T-cell (primary cell): ENCODE measurements at regions of chr18 and their contacts with region 1.

Region 1: DNA sequence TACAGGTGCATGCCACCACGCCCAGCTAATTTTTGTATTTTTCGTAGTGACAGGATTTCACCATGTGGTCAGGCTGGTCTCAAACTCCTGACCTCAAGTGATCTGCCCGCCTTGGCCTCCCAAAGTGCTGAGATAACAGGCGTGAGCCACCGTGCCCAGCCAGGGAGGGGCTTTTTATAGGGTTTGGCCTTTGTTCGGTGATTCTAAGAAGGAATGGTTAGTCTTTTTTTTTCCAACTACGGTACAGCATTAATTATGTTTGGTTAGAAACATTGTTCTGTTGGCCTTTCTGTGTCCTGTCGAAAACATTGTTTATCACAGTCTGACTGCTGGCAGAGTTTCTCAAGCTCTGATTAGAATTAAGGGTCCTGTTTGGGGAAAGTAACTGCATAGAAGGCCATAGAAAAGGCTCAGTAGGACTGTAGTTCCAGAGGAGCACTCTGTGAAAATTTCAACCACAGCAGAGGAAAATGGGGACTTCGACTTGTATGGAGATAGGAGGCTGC is 19.3 kb upstream of the SMCHD1 start:
- DNase-seq: peak in 4 of 35 experiments; percentile 4 to 61 (median 20)
- ATAC-seq: peak; percentile 34 to 52 (median 49)
- H3K4me3 ChIP-seq: peak overlapping the region; percentile 0 to 35
- H3K4me3 Mint-ChIP-seq: peak overlapping the region; percentile 66 to 84 (median 79)
- H3K27ac ChIP-seq: peak overlapping the region; percentile 100
- H3K27ac Mint-ChIP-seq: peak overlapping the region; percentile 99 to 100
- H3K4me1 ChIP-seq: peaks cover 50 to 78% of the 10 kb centered on the region in 2 experiments
- H3K4me1 Mint-ChIP-seq: peaks cover 97 to 99% (median 98%) of the 10 kb centered on the region in 3 donors
- H3K27me3 ChIP-seq: no peaks in the 10 kb centered on the region
- H3K27me3 Mint-ChIP-seq: no peaks in the 10 kb centered on the region

Region 2: DNA sequence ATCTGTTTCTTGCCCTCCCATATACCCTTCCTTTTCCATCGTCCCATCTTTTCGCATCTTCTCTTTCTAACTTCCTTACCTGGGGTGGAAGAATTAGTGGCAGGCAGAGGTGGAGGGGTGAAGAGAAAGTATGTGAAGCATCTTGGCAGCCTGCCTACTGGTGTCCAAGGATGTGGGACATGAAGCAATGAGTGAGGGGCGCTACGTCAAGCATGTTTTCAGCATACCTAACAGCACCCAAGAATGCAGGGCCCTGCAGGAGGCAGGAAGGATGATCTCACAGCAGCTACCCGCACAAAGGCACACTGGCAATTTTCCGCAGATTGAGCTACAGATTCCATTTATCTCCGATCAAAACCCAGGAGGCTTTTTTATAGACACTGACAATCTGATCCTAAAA is 107.0 kb before region 1 on chr18:
- CTCF ChIA-PET with region 1: no interaction called
- POLR2A ChIA-PET with region 1: no interaction called
- DNase-seq: no peak
- ATAC-seq: no peak
- H3K4me3 ChIP-seq: no peak overlapping the region
- H3K4me3 Mint-ChIP-seq: no peak overlapping the region
- H3K27ac ChIP-seq: no peak overlapping the region
- H3K27ac Mint-ChIP-seq: no peak overlapping the region
- H3K4me1 ChIP-seq: no peaks in the 10 kb centered on the region
- H3K4me1 Mint-ChIP-seq: no peaks in the 10 kb centered on the region
- H3K27me3 ChIP-seq: no peaks in the 10 kb centered on the region
- H3K27me3 Mint-ChIP-seq: no peaks in the 10 kb centered on the region

Region 3: GRCh38 chr18:2571200-2572143 is 64.7 kb before region 1 on chr18 and contains the starts of genes METTL4 and NDC80:
- CTCF ChIA-PET with region 1: interaction called in 1 of 2 experiments, 19 read pairs
- POLR2A ChIA-PET with region 1: interaction called in 1 of 2 experiments, 7 read pairs
- DNase-seq: peak; percentile 62 to 93 (median 78)
- ATAC-seq: peak; percentile 81 to 88 (median 86)
- H3K4me3 ChIP-seq: peak within 1 kb of the TSS; percentile 79 to 93
- H3K4me3 Mint-ChIP-seq: peak within 1 kb of the TSS; percentile 98 to 100 (median 99)
- H3K27ac ChIP-seq: peak within 1 kb of the TSS; percentile 98
- H3K27ac Mint-ChIP-seq: peak within 1 kb of the TSS; percentile 99 to 100
- H3K4me1 ChIP-seq: peaks cover 21 to 23% of the 10 kb centered on the region in 2 experiments
- H3K4me1 Mint-ChIP-seq: peaks cover 58 to 70% (median 69%) of the 10 kb centered on the region in 3 donors
- H3K27me3 ChIP-seq: no peaks in the 10 kb centered on the region
- H3K27me3 Mint-ChIP-seq: no peaks in the 10 kb centered on the region
- total RNA-seq, gene METTL4: 15.1 to 27.7 (median 21.4) TPM
- total RNA-seq, gene NDC80: 2.3 to 8.2 (median 3.3) TPM

Region 4: GRCh38 chr18:2589345-2590068 is 46.7 kb before region 1 on chr18:
- CTCF ChIA-PET with region 1: interaction called, 6 to 10 read pairs
- POLR2A ChIA-PET with region 1: interaction called, 7 read pairs
- DNase-seq: peak in 1 of 35 experiments; percentile 45
- ATAC-seq: peak; percentile 69 to 87 (median 82)
- H3K4me3 ChIP-seq: peak overlapping the region; percentile 4 to 39
- H3K4me3 Mint-ChIP-seq: peak overlapping the region; percentile 56 to 82 (median 65)
- H3K27ac ChIP-seq: peak overlapping the region; percentile 92
- H3K27ac Mint-ChIP-seq: peak overlapping the region; percentile 94 to 96
- H3K4me1 ChIP-seq: peaks cover 15 to 47% of the 10 kb centered on the region in 2 experiments
- H3K4me1 Mint-ChIP-seq: peaks cover 47 to 56% (median 50%) of the 10 kb centered on the region in 3 donors
- H3K27me3 ChIP-seq: no peaks in the 10 kb centered on the region
- H3K27me3 Mint-ChIP-seq: no peaks in the 10 kb centered on the region

Region 5: GRCh38 chr18:2606335-2606734 is 29.8 kb before region 1 on chr18:
- CTCF ChIA-PET with region 1: interaction called in 1 of 2 experiments, 37 read pairs
- POLR2A ChIA-PET with region 1: interaction called, 15 to 60 read pairs
- DNase-seq: peak in 1 of 35 experiments; percentile 55
- ATAC-seq: peak in 2 of 4 experiments; percentile 33 to 79
- H3K4me3 ChIP-seq: no peak overlapping the region
- H3K4me3 Mint-ChIP-seq: peak overlapping the region; percentile 26 to 59 (median 32)
- H3K27ac ChIP-seq: peak overlapping the region; percentile 91
- H3K27ac Mint-ChIP-seq: peak overlapping the region; percentile 83 to 92
- H3K4me1 ChIP-seq: peaks cover 10 to 34% of the 10 kb centered on the region in 2 experiments
- H3K4me1 Mint-ChIP-seq: peaks cover 55 to 62% (median 56%) of the 10 kb centered on the region in 3 donors
- H3K27me3 ChIP-seq: no peaks in the 10 kb centered on the region
- H3K27me3 Mint-ChIP-seq: no peaks in the 10 kb centered on the region

Region 6: GRCh38 chr18:2846636-2847364 is 210.6 kb after region 1 on chr18 and contains the start of gene EMILIN2:
- CTCF ChIA-PET with region 1: no interaction called
- POLR2A ChIA-PET with region 1: no interaction called
- DNase-seq: peak in 34 of 35 experiments; percentile 8 to 74 (median 40)
- ATAC-seq: peak; percentile 44 to 63 (median 50)
- H3K4me3 ChIP-seq: peak within 1 kb of the TSS; percentile 52 to 85
- H3K4me3 Mint-ChIP-seq: peak within 1 kb of the TSS; percentile 77 to 91 (median 86)
- H3K27ac ChIP-seq: no peak within 1 kb of the TSS
- H3K27ac Mint-ChIP-seq: no peak within 1 kb of the TSS
- H3K4me1 ChIP-seq: peaks cover 4 to 23% of the 10 kb centered on the region in 2 experiments
- H3K4me1 Mint-ChIP-seq: peaks cover 22 to 24% (median 23%) of the 10 kb centered on the region in 3 donors
- H3K27me3 ChIP-seq: peaks cover 5 to 48% of the 10 kb centered on the region in 2 experiments
- H3K27me3 Mint-ChIP-seq: peaks cover 43 to 48% of the 10 kb centered on the region in 2 donors
- total RNA-seq, gene EMILIN2: 3.3 to 19.2 (median 15.0) TPM